Naive thymus-derived CD4-positive, alpha-beta T cell (primary cell): ENCODE measurements at regions of chr2 and their contacts with region 1.

Region 1: DNA sequence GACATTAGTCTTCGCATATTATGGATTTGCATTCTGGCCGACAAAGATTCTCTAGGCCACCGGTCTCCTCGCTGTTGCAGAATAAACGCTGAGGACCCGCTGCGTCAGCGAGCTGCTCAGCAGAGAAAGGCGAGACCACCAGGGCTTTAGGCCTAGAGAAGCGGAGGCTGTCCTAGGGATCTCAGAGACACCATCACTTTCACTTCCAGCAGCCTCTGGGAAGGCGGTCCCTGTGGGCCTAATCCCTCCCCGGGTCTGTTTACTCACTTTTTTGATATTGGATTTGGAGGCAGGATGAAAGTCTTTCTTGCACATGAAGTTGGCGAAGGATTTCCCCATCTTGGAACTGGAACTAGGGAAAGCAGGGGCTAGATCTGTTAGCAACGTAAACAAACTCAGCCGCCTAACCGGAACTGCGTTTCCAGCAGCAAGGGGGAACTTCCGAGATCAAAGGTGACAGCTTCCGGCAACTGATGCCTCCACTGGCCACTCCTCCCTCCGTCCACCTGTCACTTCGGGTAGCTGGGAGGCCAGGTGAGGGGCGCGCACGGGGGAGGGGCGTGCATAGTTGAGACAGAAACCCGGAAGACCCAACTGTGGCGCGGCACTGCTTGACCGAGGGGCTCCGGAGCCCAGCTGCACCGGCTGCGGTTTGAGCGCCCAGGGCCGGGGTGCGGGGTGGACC is at the start of gene SCRN3:
- DNase-seq: peak; percentile 49 to 89 (median 80)
- ATAC-seq: peak; percentile 93
- H3K4me3 ChIP-seq: peak within 1 kb of the TSS; percentile 85
- H3K4me3 Mint-ChIP-seq: peak within 1 kb of the TSS; percentile 86 to 100 (median 98)
- H3K27ac ChIP-seq: peak within 1 kb of the TSS; percentile 93
- H3K27ac Mint-ChIP-seq: peak within 1 kb of the TSS; percentile 97 to 100 (median 99)
- H3K4me1 ChIP-seq: peaks cover 18 to 23% of the 10 kb centered on the region in 2 donors
- H3K4me1 Mint-ChIP-seq: peaks cover 27 to 80% (median 65%) of the 10 kb centered on the region in 7 donors
- H3K27me3 ChIP-seq: no peaks in the 10 kb centered on the region
- H3K27me3 Mint-ChIP-seq: no peaks in the 10 kb centered on the region
- total RNA-seq, gene SCRN3: 12.3 to 22.1 (median 16.4) TPM

Region 2: DNA sequence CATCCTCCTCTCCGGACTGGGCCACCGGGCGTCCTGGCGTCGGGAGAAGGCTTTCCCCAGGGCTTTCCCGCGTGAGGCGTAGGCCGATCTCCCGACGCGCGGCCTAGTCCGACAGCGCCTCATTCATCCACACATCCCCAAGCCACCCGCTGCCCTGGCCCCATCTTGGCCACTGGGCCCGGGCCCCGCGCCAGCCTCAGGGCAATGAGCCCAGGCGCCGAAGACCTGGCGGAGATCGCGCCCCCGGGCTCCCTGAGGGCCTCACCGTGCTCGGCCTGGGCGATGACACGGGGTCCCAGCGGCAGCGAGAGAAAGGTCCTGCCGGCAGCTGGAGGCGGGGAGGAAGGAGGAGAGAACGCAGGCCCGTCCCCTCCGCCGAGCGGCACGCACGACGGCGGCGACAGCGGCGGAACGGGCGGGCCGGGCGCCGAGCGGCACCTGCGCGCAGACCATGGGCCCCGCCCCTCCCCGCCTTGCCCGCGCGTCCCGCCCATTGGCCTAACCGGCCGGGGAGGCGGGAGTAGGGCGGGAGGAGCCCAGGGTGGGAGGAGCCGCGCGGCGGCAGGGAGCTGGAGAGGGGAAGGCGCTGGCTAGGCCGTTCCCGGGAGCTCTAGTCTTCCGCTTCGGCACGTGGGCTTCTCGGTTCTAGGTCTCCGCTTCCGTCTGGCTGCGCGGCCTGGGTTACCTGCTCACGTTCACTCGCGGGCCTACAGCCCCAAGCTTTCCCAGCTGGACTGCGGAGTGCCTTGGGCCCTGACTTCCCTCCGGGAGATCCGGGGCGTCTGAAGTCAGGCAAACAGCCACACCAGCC is 147.0 kb before region 1 on chr2 and contains the start of gene OLA1:
- CTCF ChIA-PET with region 1: no interaction called
- POLR2A ChIA-PET with region 1: interaction called, 3 read pairs
- intact Hi-C with region 1: loop called (anchors 1 to 2 kb)
- DNase-seq: peak; percentile 91 to 99 (median 95)
- ATAC-seq: peak; percentile 99
- H3K4me3 ChIP-seq: peak within 1 kb of the TSS; percentile 90
- H3K4me3 Mint-ChIP-seq: peak within 1 kb of the TSS; percentile 71 to 88 (median 86)
- H3K27ac ChIP-seq: peak within 1 kb of the TSS; percentile 82
- H3K27ac Mint-ChIP-seq: peak within 1 kb of the TSS; percentile 67 to 91 (median 79)
- H3K4me1 ChIP-seq: peaks cover 6 to 12% of the 10 kb centered on the region in 2 donors
- H3K4me1 Mint-ChIP-seq: peaks cover 18 to 32% (median 25%) of the 10 kb centered on the region in 7 donors
- H3K27me3 ChIP-seq: no peaks in the 10 kb centered on the region
- H3K27me3 Mint-ChIP-seq: peaks cover 0 to 5% (median 0%) of the 10 kb centered on the region in 5 donors
- total RNA-seq, gene OLA1: 34.4 to 84.7 (median 40.3) TPM

Region 3: DNA sequence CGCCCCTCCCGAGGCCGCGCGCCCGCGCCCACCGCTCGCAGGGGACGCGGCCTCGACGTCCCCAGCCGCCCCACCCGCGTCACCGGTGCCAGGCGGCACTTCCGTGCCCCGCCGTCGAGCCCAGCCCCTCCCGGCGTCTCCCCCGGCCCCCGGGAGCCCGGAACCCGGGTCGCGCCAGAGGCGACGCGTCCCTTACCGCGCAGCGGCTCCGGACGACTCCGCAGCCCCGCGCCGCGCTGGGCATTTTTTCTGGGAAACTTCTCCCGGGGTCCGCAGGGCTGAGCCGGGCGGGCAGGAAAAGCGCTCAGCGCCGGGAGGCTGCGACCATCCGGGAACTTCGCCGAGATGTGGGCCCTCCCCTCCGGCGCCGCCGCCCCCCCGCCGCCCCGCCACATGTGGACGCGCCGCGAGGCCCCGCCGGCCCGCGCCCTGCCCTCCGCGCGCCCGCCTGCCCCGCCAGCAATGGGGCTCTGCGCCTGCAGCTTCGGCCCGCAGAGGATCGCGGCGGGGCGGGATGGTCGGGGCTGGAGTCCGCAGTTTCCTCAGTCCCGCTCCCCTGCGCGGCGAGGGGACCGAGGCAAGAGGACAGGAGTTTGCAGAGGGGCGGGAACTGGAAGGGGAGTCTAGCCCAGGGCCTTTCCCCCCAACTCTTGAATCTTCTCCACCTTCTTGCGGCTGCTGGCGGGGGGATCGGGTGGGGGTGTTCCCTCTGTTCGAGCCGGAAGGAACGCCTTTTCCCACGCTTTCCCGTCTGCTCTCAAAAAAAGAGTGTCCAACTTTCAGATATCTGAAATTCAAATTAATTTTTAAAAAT is 287.4 kb after region 1 on chr2:
- CTCF ChIA-PET with region 1: no interaction called
- POLR2A ChIA-PET with region 1: no interaction called
- intact Hi-C with region 1: loop called in 1 of 2 experiments (anchors 5 kb)
- DNase-seq: peak; percentile 56 to 73 (median 71)
- ATAC-seq: peak; percentile 78
- H3K4me3 ChIP-seq: peak overlapping the region; percentile 72
- H3K4me3 Mint-ChIP-seq: peak overlapping the region; percentile 92 to 99 (median 96)
- H3K27ac ChIP-seq: peak overlapping the region; percentile 88
- H3K27ac Mint-ChIP-seq: peak overlapping the region; percentile 91 to 98 (median 96)
- H3K4me1 ChIP-seq: peaks cover 11% of the 10 kb centered on the region in 2 donors
- H3K4me1 Mint-ChIP-seq: peaks cover 34 to 69% (median 61%) of the 10 kb centered on the region in 7 donors
- H3K27me3 ChIP-seq: no peaks in the 10 kb centered on the region
- H3K27me3 Mint-ChIP-seq: no peaks in the 10 kb centered on the region

Region 4: GRCh38 chr2:175004980-175005732 is 609.7 kb after region 1 on chr2 and contains the start of gene CHN1:
- CTCF ChIA-PET with region 1: no interaction called
- POLR2A ChIA-PET with region 1: no interaction called
- intact Hi-C with region 1: loop called (anchors 5 to 10 kb)
- DNase-seq: peak; percentile 48 to 73 (median 63)
- ATAC-seq: peak; percentile 97
- H3K4me3 ChIP-seq: peak within 1 kb of the TSS; percentile 55
- H3K4me3 Mint-ChIP-seq: peak within 1 kb of the TSS; percentile 82 to 88 (median 84)
- H3K27ac ChIP-seq: no peak within 1 kb of the TSS
- H3K27ac Mint-ChIP-seq: peak within 1 kb of the TSS in 5 of 9 donors; percentile 12 to 41 (median 34)
- H3K4me1 ChIP-seq: peaks cover 0 to 6% of the 10 kb centered on the region in 2 donors
- H3K4me1 Mint-ChIP-seq: peaks cover 0 to 12% (median 5%) of the 10 kb centered on the region in 7 donors
- H3K27me3 ChIP-seq: peaks cover 9 to 14% of the 10 kb centered on the region in 2 donors
- H3K27me3 Mint-ChIP-seq: peaks cover 52 to 77% (median 59%) of the 10 kb centered on the region in 5 donors
- total RNA-seq, gene CHN1: 0.81 to 3.5 (median 2.3) TPM

Region 5: GRCh38 chr2:175181104-175181876 is 785.9 kb after region 1 on chr2 and contains the start of gene ATP5MC3:
- CTCF ChIA-PET with region 1: no interaction called
- POLR2A ChIA-PET with region 1: no interaction called
- intact Hi-C with region 1: loop called in 1 of 2 experiments (anchors 5 kb)
- DNase-seq: peak; percentile 83 to 92 (median 89)
- ATAC-seq: peak; percentile 93
- H3K4me3 ChIP-seq: peak within 1 kb of the TSS; percentile 84
- H3K4me3 Mint-ChIP-seq: peak within 1 kb of the TSS; percentile 77 to 96 (median 88)
- H3K27ac ChIP-seq: peak within 1 kb of the TSS; percentile 89
- H3K27ac Mint-ChIP-seq: peak within 1 kb of the TSS; percentile 86 to 99 (median 93)
- H3K4me1 ChIP-seq: peaks cover 6 to 13% of the 10 kb centered on the region in 2 donors
- H3K4me1 Mint-ChIP-seq: peaks cover 14 to 39% (median 32%) of the 10 kb centered on the region in 7 donors
- H3K27me3 ChIP-seq: no peaks in the 10 kb centered on the region
- H3K27me3 Mint-ChIP-seq: no peaks in the 10 kb centered on the region
- total RNA-seq, gene ATP5MC3: 70.3 to 220 (median 77.6) TPM